Vagina (tissue), 2 donors: ENCODE measurements at regions of chr16 and their contacts with region 1.

Region 1: DNA sequence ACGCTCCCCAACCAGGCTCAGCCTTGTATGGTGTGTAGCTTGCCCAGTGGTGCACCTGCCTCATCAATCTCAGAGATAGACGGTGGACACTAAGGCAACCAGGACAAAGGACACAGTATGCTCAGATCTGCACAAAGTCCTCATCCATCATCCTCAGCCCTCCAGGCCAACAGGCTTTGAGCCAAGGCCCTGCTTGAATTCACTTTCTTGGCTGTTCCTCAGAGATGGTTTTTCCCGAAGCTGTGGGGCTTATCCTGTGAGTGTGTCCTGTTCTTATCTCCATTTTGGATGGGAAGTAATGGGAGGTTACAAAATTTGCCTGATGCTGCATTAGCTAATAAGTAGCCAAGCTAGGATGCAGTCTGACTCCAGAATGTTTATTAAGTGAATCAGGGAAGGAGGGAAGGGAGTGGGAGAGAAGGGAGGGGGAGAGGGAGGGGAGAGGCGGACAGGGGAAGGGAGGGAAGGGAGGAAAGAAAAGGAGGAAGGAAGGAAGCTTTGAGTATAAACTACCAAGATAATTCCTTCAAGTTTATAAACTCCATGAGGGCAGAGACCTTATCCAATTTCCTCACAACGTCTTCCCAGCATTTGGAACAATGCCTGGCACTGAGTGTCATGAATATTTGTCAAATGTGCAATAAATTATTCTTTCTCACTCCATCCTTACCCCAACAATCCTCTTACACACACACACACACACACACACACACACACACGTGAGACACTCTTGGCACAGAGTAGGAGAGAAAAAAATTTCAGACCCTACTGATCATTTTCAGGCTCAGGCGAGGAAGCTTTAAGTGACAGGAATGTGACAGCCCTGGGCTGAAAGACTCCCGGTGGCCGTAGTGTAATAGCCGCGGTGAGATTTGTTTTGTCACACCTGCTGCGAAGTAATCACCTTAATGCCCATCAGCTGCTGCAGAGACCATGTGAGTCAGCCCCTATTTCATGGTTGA is 84.3 kb downstream of the BMERB1 start:
- DNase-seq: peak in 1 of 2 donors; percentile 91
- H3K4me3 ChIP-seq: no peak overlapping the region
- H3K27ac ChIP-seq: peak overlapping the region; percentile 58
- H3K4me1 ChIP-seq: peaks cover 38% of the 10 kb centered on the region
- H3K27me3 ChIP-seq: no peaks in the 10 kb centered on the region
- CTCF ChIP-seq: no peak
- POLR2A ChIP-seq: no peak

Region 2: DNA sequence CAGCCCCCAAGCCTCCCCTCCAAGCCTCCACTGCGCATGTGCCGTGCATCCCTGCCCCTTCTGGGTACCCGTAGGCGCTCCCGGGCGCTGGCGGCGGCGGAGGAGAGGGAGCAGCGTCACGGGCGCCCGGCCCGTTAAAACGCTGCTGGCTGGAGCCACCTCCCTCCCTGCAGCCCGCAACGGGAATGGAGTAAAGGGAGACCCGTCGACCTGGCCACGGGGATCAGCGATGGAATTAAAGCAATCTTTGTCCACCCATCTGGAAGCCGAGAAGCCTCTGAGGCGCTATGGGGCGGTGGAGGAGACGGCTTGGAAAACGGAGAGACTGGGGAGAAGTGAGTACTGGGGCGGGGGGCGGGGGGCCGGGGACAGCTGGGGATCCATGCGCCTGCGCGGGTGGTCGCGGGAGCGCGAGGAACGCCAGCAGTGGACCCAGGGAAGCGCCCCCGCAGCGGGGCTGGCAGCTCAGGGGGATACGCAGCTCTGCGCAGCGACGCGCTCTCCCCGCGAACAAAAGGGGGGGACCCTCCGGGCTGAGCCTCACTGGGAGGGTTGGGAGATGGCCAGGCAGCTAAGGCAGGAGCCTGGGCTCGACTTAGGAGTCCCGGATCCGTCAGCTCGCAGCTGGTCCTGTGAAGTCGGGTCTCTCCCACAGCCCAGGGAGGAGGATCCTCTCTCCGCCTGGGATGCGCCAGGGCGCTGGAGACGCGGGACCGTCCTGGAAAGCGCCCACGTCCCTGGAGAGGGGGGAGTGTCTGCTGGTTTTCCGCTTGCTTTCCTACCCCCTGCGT is 84.1 kb before region 1 on chr16 and contains the start of gene BMERB1:
- intact Hi-C with region 1: loop called (anchors 10 kb)
- DNase-seq: no peak
- H3K4me3 ChIP-seq: peak within 1 kb of the TSS; percentile 60 to 76
- H3K27ac ChIP-seq: peak within 1 kb of the TSS; percentile 86
- H3K4me1 ChIP-seq: peaks cover 21% of the 10 kb centered on the region
- H3K27me3 ChIP-seq: no peaks in the 10 kb centered on the region
- CTCF ChIP-seq: no peak
- POLR2A ChIP-seq: peak in 1 of 2 donors; percentile 73
- total RNA-seq, gene BMERB1: 46.9 TPM

Region 3: GRCh38 chr16:15572329-15573001 is 53.8 kb after region 1 on chr16:
- intact Hi-C with region 1: loop called (anchors 10 kb)
- DNase-seq: no peak
- H3K4me3 ChIP-seq: no peak overlapping the region
- H3K27ac ChIP-seq: peak overlapping the region; percentile 53
- H3K4me1 ChIP-seq: peaks cover 31% of the 10 kb centered on the region
- H3K27me3 ChIP-seq: no peaks in the 10 kb centered on the region
- CTCF ChIP-seq: no peak
- POLR2A ChIP-seq: no peak